Activated CD4-positive, alpha-beta memory T cell treated with anti-CD3 and anti-CD28 coated beads for 36 hours (primary cell): ENCODE measurements at regions of chr18 and their contacts with region 1.

Region 1: GRCh38 chr18:21194871-21195771 is 46.9 kb upstream of the GREB1L start:
- DNase-seq: no peak
- H3K4me3 Mint-ChIP-seq: no peak overlapping the region
- H3K27ac Mint-ChIP-seq: no peak overlapping the region
- H3K4me1 Mint-ChIP-seq: no peaks in the 10 kb centered on the region
- H3K27me3 Mint-ChIP-seq: peaks cover 14% of the 10 kb centered on the region

Region 2: DNA sequence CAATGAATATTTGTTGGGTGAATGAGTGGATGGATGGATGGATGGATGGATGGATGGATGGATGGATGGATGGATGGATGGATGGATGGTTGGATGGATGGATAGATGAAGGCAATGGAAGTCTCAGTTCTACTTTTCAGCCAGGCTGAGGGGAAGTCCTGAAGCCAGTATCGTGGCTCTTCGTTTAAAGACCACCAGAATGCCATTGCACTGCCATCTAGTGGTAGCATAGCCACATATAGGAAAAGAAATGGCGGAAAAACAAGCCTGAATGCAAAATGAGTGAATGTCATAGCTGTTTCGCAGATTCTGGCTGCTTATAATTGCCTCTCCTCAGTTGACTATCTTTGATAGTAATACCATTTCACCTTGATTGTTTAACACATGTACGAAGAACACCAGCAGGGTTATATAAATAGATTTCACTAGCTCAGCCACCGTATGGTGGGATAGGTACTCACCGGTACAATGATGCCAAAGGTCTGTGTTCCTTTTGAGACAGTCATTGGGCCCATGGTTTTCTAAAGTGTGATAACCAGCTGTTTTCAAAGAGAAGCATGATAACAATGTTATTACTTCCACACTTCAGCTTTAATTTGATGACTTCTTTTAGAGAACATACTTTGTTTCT is 15.4 kb before region 1 on chr18:
- CTCF ChIA-PET with region 1: interaction called, 84 read pairs
- POLR2A ChIA-PET with region 1: no interaction called
- intact Hi-C with region 1: no loop called
- DNase-seq: peak; percentile 50
- H3K4me3 Mint-ChIP-seq: no peak overlapping the region
- H3K27ac Mint-ChIP-seq: no peak overlapping the region
- H3K4me1 Mint-ChIP-seq: peaks cover 6% of the 10 kb centered on the region
- H3K27me3 Mint-ChIP-seq: no peaks in the 10 kb centered on the region

Region 3: DNA sequence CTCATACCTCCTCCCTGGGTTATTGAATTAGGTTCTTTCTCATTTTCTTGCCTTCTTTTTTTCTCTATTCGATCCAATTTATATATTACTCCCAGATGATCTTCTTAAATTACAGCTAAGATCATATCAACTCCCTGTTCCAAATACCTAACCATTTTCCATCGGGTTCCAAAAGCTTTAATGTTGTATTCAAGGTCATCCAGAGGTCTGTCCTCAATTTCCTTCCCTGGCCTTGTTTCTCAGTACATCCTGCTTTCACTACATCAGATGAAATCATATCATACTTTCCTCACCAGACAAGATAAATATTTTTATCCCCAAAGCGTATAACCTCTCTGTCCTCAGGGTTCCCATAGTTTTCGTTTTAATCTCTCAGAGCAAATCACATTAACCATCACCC is 10.6 kb after region 1 on chr18:
- CTCF ChIA-PET with region 1: interaction called, 10 read pairs
- POLR2A ChIA-PET with region 1: no interaction called
- intact Hi-C with region 1: no loop called
- DNase-seq: no peak
- H3K4me3 Mint-ChIP-seq: no peak overlapping the region
- H3K27ac Mint-ChIP-seq: no peak overlapping the region
- H3K4me1 Mint-ChIP-seq: no peaks in the 10 kb centered on the region
- H3K27me3 Mint-ChIP-seq: no peaks in the 10 kb centered on the region

Region 4: GRCh38 chr18:21444465-21445023 is 249.4 kb after region 1 on chr18:
- CTCF ChIA-PET with region 1: interaction called, 12 read pairs
- POLR2A ChIA-PET with region 1: no interaction called
- intact Hi-C with region 1: loop called (anchors 1 kb)
- DNase-seq: no peak
- H3K4me3 Mint-ChIP-seq: no peak overlapping the region
- H3K27ac Mint-ChIP-seq: no peak overlapping the region
- H3K4me1 Mint-ChIP-seq: no peaks in the 10 kb centered on the region
- H3K27me3 Mint-ChIP-seq: peaks cover 10% of the 10 kb centered on the region

Region 5: GRCh38 chr18:21955757-21956652 is 760.9 kb after region 1 on chr18:
- CTCF ChIA-PET with region 1: interaction called, 20 read pairs
- POLR2A ChIA-PET with region 1: no interaction called
- intact Hi-C with region 1: loop called (anchors 1 kb)
- DNase-seq: peak; percentile 82
- H3K4me3 Mint-ChIP-seq: no peak overlapping the region
- H3K27ac Mint-ChIP-seq: no peak overlapping the region
- H3K4me1 Mint-ChIP-seq: no peaks in the 10 kb centered on the region
- H3K27me3 Mint-ChIP-seq: peaks cover 23% of the 10 kb centered on the region